MCF 10A (cell line): ENCODE measurements at regions of chr17 and their contacts with region 1.

Region 1: DNA sequence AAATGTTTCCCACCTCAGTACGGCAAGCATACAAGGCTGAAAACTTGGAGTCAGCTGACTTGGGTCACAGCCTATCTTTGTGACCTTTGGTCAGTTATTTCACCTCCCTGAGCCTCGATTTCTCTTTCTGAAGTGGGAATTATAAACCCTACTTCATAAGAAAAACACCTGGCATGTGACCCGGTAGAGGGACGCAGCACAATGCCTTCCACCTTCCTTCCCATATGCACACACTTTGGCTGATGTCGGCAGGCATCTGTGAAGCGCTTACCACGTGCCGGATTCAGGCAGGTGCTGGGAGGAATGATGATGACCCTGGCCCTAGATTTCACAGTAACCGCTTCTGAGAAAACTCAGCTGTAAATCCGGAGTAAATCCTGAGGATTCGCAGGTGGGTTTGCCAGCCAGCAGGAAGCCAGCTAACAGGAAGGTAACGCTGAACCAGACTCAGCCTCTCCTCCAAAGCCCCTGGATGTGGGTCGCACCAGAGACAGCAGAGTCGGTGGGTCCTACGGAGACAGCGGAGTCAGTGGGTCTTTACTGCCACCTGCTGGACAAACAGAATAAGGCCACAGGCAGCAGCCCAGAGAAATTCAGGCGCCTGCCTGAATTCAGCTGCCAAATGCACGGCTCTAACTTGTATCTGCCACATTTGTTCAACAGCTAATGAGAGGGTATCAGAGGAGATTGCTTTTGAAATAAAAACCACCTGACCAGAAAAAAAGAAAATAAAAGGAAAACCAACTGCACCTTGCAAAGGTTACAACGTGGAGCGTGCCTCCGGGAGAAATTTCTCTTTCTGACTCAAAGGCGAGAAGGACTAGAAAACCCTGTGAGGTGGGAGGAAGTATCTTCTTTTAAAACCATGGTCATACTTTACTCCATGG is 16.6 kb downstream of the COPRS start:
- DNase-seq: peak; percentile 65
- H3K4me3 Mint-ChIP-seq: no peak overlapping the region
- H3K27ac Mint-ChIP-seq: no peak overlapping the region
- H3K4me1 Mint-ChIP-seq: no peaks in the 10 kb centered on the region
- H3K27me3 Mint-ChIP-seq: no peaks in the 10 kb centered on the region
- CTCF ChIP-seq: peak; percentile 94

Region 2: DNA sequence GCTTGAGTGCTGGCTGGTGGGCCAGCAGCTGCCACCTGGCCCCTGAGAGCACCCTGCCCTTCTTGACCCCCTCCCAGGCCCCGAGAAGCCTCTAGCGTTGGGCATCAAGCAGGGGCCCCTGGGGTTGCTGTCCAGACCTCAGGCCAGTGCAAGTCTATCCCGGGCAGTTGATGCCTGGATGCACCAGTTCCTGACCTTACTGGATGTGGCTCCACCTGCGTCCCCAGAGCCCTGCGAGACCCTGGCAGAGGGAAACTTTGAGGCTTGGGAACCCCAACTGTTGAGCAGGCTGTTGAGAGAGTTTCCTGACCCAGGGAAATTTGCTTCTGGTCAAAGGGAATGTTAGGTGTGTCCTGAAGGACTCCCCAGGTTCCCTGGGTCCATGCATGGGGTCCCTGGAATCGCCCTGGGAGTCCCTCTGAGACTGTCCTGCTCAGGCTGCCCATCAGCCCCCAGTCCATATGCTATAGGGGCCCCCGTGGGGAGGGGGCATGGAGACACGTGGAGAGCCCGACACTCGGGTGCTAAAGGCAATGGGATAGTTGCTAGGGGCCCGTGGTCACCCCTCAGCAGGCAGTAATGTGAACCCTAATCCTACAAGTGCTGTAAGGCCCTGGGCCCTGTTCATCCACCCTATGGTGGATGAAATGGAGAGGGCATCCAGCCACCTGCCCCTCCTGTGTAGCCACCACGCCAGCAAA is 404.6 kb before region 1 on chr17:
- CTCF ChIA-PET with region 1: interaction called, 24 read pairs
- POLR2A ChIA-PET with region 1: interaction called, 4 read pairs
- intact Hi-C with region 1: loop called (anchors 1 kb)
- DNase-seq: no peak
- H3K4me3 Mint-ChIP-seq: no peak overlapping the region
- H3K27ac Mint-ChIP-seq: no peak overlapping the region
- H3K4me1 Mint-ChIP-seq: no peaks in the 10 kb centered on the region
- H3K27me3 Mint-ChIP-seq: peaks cover 34% of the 10 kb centered on the region
- CTCF ChIP-seq: no peak

Region 3: GRCh38 chr17:31533546-31534155 is 308.8 kb before region 1 on chr17:
- CTCF ChIA-PET with region 1: interaction called, 20 read pairs
- POLR2A ChIA-PET with region 1: interaction called, 3 read pairs
- intact Hi-C with region 1: no loop called
- DNase-seq: peak; percentile 70
- H3K4me3 Mint-ChIP-seq: no peak overlapping the region
- H3K27ac Mint-ChIP-seq: no peak overlapping the region
- H3K4me1 Mint-ChIP-seq: peaks cover 10% of the 10 kb centered on the region
- H3K27me3 Mint-ChIP-seq: no peaks in the 10 kb centered on the region
- CTCF ChIP-seq: no peak

Region 4: GRCh38 chr17:31570951-31571892 is 271.2 kb before region 1 on chr17:
- CTCF ChIA-PET with region 1: interaction called, 15 read pairs
- POLR2A ChIA-PET with region 1: interaction called, 3 read pairs
- intact Hi-C with region 1: no loop called
- DNase-seq: peak; percentile 88
- H3K4me3 Mint-ChIP-seq: peak overlapping the region; percentile 44
- H3K27ac Mint-ChIP-seq: peak overlapping the region; percentile 92
- H3K4me1 Mint-ChIP-seq: peaks cover 41% of the 10 kb centered on the region
- H3K27me3 Mint-ChIP-seq: no peaks in the 10 kb centered on the region
- CTCF ChIP-seq: no peak

Region 5: DNA sequence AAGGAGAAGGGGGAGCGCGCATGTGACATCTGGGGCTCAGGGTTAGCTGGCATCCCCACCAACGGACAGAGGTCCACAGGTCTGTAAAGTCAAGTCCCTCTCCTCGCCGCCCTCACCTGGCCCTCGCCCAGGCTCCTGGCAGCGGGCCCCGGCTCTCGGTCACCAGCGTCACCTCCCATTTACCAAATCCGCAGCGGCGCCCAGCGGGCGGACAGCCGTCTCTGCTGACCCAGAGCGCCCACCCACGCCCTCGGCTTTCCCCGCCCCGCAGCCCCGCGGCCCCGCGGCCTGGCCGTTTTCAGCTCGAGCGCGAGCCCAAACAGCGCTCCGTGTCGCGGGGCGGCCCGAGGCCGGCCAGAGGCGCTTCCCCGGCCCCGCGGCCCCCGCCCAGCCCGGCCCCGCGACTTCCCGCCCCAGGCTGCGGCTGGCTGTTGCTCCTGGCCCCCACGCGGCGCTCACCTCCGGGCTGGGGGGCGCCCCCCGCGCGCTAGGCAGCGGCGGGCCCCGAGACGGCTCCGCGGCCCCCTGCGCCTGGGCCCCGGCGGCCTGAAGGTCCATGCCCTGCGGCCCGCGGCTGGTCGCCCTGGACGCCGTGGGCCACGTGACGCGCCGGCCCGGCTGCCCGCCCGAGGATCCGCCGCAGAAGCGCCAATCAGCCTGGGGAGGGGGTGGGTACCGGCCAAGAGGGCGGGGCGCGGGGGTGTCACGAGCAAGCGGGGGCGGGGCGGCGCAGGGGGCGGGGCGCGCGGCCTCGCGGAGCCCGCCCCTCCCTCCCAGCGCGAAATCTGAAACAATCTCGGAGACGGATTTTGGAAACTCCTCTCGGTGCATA is 16.4 kb after region 1 on chr17 and contains the start of gene COPRS:
- CTCF ChIA-PET with region 1: interaction called, 18 read pairs
- POLR2A ChIA-PET with region 1: interaction called, 3 read pairs
- intact Hi-C with region 1: no loop called
- DNase-seq: peak; percentile 80
- H3K4me3 Mint-ChIP-seq: peak within 1 kb of the TSS; percentile 68
- H3K27ac Mint-ChIP-seq: no peak within 1 kb of the TSS
- H3K4me1 Mint-ChIP-seq: peaks cover 25% of the 10 kb centered on the region
- H3K27me3 Mint-ChIP-seq: no peaks in the 10 kb centered on the region
- CTCF ChIP-seq: no peak
- total RNA-seq, gene COPRS: 41.2 and 46.8 TPM in 2 replicates

Region 6: GRCh38 chr17:31917065-31917529 is 74.7 kb after region 1 on chr17:
- CTCF ChIA-PET with region 1: no interaction called
- POLR2A ChIA-PET with region 1: no interaction called
- intact Hi-C with region 1: no loop called
- DNase-seq: no peak
- H3K4me3 Mint-ChIP-seq: no peak overlapping the region
- H3K27ac Mint-ChIP-seq: no peak overlapping the region
- H3K4me1 Mint-ChIP-seq: peaks cover 6% of the 10 kb centered on the region
- H3K27me3 Mint-ChIP-seq: no peaks in the 10 kb centered on the region
- CTCF ChIP-seq: no peak